GM13976 (cell line): ENCODE measurements at regions of chr1 and their contacts with region 1.

Region 1: DNA sequence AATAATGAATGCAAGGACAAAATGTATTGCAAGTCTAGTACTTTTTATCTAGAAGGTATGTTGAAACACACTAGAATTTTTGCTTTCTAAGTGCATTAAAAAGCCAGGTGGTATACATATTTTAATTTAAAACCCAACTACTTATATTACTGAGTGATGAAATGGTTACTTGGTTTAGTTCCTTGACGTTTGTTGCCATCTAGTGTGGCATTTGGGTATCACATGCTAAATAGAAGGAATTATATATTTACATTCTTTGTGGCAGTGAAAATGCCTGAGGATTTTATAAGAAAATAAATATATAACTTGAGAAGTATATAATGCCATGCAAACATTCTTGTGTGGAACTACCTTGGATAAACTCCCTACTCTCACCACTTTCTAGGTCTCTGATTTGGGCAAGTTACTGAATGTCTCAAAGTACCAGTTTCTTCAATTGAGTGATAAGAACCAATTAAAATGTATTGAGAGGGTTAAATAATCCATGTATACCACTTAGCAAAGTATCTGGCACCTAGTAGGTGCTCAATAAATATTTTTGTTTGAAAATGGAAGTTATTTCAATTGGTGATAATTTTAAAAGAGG is 69.6 kb downstream of the SDCCAG8 start:
- DNase-seq: peak; percentile 40
- CTCF ChIP-seq: peak; percentile 47

Region 2: DNA sequence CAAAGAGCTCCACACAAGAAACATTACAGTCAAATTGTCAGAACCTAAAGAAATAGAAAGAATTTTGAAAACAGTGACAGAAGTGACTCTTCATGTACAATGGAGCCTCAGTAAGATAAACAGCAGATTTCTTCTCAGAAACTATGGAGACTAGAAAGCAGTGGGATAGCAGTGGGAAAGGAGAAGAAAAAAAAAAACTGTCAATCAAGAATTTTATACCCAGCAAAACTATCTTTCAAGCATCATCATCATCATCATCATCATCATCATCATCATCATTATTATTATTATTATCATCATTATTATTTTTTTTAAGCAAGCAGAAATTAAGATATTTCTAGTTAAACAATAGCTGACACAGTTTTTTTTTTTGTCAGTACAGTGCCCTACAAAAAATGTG is 94.5 kb before region 1 on chr1:
- in situ Hi-C with region 1: no loop called
- DNase-seq: no peak
- CTCF ChIP-seq: no peak

Region 3: GRCh38 chr1:243748706-243749283 is 423.4 kb after region 1 on chr1:
- in situ Hi-C with region 1: loop called (anchors 25 kb)
- DNase-seq: peak; percentile 72
- CTCF ChIP-seq: peak; percentile 64

Region 4: DNA sequence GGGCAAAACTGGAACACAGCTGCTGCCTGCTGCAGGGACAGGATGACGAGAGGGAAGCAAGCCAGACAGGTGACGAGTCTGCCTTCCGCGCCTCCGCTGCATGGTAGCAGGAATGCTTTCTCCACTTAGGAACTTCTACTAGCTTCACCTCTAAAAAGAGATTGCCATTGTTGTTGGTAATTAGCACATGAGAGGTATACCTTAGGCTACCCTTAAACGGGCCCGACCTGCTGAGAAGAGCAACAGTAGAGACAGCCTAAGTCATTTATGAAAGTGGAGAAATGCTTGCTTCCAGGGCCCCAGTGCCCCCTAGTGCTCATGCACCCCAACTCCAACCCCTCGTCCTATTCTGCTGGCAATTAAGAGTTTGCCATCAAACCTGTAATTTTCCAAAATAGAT is 621.5 kb after region 1 on chr1:
- in situ Hi-C with region 1: loop called (anchors 25 kb)
- DNase-seq: peak; percentile 47
- CTCF ChIP-seq: peak; percentile 14